HCT116 (cell line): ENCODE measurements at regions of chr16 and their contacts with region 1.

Region 1: DNA sequence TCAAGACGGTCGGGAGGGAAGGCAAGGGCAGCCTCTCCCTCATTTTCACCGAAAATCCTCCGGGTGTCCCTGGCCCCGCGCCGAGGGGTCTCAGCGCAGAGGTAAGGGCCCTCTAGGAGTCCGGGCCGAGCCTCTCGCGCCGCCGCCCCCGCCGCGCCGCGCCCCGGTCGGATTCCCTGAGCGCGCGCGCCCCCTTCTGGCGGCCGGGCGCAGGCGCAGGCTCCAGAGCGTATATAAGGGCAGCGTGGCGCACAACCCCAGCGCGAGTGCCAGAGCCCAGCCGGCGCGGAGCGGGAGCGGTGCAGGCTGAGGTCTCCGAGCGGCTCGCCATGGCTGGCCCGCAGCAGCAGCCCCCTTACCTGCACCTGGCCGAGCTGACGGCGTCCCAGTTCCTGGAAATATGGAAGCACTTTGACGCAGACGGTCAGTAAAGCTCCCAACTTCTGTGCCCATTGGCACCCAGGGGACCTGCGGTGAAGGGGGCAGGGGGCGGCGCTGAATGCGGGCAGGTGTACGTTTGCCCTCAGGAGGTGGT is at the start of gene CALB2:
- DNase-seq: no peak
- ATAC-seq: peak; percentile 91
- H3K4me3 ChIP-seq: peak within 1 kb of the TSS; percentile 47 to 58
- H3K27ac ChIP-seq: no peak within 1 kb of the TSS
- H3K4me1 ChIP-seq: peaks cover 11 to 36% of the 10 kb centered on the region in 2 experiments
- H3K27me3 ChIP-seq: no peaks in the 10 kb centered on the region; the same call in 1 of the 2 replicates
- CTCF ChIP-seq: peak; percentile 54 to 91 (median 74)
- POLR2A ChIP-seq: no peak
- RAD21 ChIP-seq: peak; percentile 85
- total RNA-seq, gene CALB2: 5.5 TPM

Region 2: GRCh38 chr16:70778901-70779309 is 579.6 kb before region 1 on chr16:
- CTCF ChIA-PET with region 1: no interaction called
- POLR2A ChIA-PET with region 1: no interaction called
- RAD21 ChIA-PET with region 1: no interaction called
- intact Hi-C with region 1: loop called (anchors 2 kb)
- DNase-seq: peak; percentile 81
- ATAC-seq: peak; percentile 93
- H3K4me3 ChIP-seq: no peak overlapping the region
- H3K27ac ChIP-seq: no peak overlapping the region
- H3K4me1 ChIP-seq: peaks cover 0 to 11% of the 10 kb centered on the region in 2 experiments; a peak in 3 of 4 replicates
- H3K27me3 ChIP-seq: no peaks in the 10 kb centered on the region
- CTCF ChIP-seq: no peak
- POLR2A ChIP-seq: no peak
- RAD21 ChIP-seq: no peak

Region 3: GRCh38 chr16:70800781-70801530 is 557.6 kb before region 1 on chr16 and contains the start of gene VAC14:
- CTCF ChIA-PET with region 1: no interaction called
- POLR2A ChIA-PET with region 1: no interaction called
- RAD21 ChIA-PET with region 1: no interaction called
- intact Hi-C with region 1: loop called (anchors 5 kb)
- DNase-seq: peak; percentile 87
- ATAC-seq: peak; percentile 98
- H3K4me3 ChIP-seq: peak within 1 kb of the TSS; percentile 74 to 97
- H3K27ac ChIP-seq: peak within 1 kb of the TSS; percentile 57
- H3K4me1 ChIP-seq: peaks cover 9 to 16% of the 10 kb centered on the region in 2 experiments
- H3K27me3 ChIP-seq: no peaks in the 10 kb centered on the region
- CTCF ChIP-seq: no peak
- POLR2A ChIP-seq: peak; percentile 86
- RAD21 ChIP-seq: no peak
- total RNA-seq, gene VAC14: 35.3 TPM

Region 4: DNA sequence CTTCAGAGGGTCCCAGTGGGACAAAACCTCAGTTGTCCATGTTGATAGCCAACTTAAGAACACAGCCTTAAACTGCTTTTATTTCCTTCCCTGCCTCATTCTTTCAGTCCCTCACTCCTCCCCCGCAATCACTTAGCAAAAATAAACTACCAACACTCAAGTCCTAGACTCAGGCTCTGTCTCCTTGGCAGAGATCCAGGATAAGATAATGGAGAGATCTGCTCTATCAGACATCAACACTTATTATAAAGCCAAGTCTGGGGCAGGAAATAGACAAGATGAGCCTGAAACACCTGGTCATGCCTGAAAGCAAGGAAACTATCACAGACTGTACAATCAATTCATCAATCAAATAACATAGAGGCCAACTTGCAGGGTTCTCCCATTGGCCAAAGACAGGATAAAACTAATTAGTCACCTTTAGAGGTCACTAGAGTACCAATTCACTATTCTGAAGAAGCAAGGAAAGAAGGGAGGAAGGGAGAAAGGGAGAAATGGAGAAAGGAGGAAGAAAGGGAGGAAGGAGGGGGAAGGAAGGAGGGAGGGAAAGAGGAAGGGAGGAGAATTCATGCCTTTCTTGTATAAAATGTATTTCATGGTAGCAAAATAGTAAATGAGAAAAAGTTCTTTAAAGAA is 143.7 kb before region 1 on chr16:
- CTCF ChIA-PET with region 1: no interaction called
- POLR2A ChIA-PET with region 1: no interaction called
- RAD21 ChIA-PET with region 1: no interaction called
- intact Hi-C with region 1: loop called (anchors 1 kb)
- DNase-seq: peak; percentile 4
- ATAC-seq: peak; percentile 77
- H3K4me3 ChIP-seq: no peak overlapping the region
- H3K27ac ChIP-seq: no peak overlapping the region
- H3K4me1 ChIP-seq: no peaks in the 10 kb centered on the region
- H3K27me3 ChIP-seq: peaks cover 33% of the 10 kb centered on the region
- CTCF ChIP-seq: peak in 2 of 3 experiments; percentile 16 to 69; a peak in 3 of 6 replicates
- POLR2A ChIP-seq: no peak
- RAD21 ChIP-seq: peak; percentile 70

Region 5: DNA sequence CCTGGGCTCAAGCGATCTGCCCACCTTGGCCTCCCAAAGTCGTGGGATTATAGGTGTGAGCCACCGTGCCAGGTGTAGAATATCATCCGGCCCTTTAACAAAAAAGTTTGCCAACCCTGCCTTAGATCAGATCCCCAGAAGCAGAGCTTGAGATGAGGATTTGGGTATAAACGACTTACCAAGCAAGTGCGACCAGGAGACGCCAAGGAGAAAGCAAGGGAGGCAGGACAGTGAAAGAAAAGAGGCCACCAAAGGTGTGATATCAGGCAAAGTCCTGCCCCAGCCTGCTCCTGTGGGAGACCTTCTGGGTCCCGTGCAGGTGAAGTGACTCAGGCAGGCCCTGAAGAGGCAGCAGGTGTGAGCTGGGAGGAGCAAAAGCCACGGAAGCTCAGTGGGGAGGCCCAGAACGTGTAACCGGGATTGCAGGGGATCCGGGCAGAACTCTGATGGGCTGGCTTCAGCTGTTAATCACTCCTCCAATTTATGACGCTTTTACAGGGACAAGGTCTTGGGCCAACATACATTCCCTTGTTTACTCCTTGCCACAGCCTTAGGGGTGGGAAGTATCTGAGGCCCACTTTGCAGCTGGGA is 14.1 kb before region 1 on chr16:
- CTCF ChIA-PET with region 1: no interaction called
- POLR2A ChIA-PET with region 1: no interaction called
- RAD21 ChIA-PET with region 1: no interaction called
- intact Hi-C with region 1: no loop called
- DNase-seq: no peak
- ATAC-seq: no peak
- H3K4me3 ChIP-seq: no peak overlapping the region
- H3K27ac ChIP-seq: no peak overlapping the region
- H3K4me1 ChIP-seq: peaks cover 0 to 5% of the 10 kb centered on the region in 2 experiments; a peak in 2 of 4 replicates
- H3K27me3 ChIP-seq: no peaks in the 10 kb centered on the region
- CTCF ChIP-seq: no peak
- POLR2A ChIP-seq: no peak
- RAD21 ChIP-seq: no peak

Region 6: GRCh38 chr16:71373073-71373472 is 14.5 kb after region 1 on chr16:
- CTCF ChIA-PET with region 1: no interaction called
- POLR2A ChIA-PET with region 1: no interaction called
- RAD21 ChIA-PET with region 1: no interaction called
- intact Hi-C with region 1: no loop called
- DNase-seq: peak; percentile 21
- ATAC-seq: peak; percentile 85
- H3K4me3 ChIP-seq: no peak overlapping the region
- H3K27ac ChIP-seq: no peak overlapping the region
- H3K4me1 ChIP-seq: peaks cover 9 to 11% of the 10 kb centered on the region in 2 experiments; a peak in 3 of 4 replicates
- H3K27me3 ChIP-seq: no peaks in the 10 kb centered on the region
- CTCF ChIP-seq: no peak
- POLR2A ChIP-seq: no peak
- RAD21 ChIP-seq: no peak

Region 7: DNA sequence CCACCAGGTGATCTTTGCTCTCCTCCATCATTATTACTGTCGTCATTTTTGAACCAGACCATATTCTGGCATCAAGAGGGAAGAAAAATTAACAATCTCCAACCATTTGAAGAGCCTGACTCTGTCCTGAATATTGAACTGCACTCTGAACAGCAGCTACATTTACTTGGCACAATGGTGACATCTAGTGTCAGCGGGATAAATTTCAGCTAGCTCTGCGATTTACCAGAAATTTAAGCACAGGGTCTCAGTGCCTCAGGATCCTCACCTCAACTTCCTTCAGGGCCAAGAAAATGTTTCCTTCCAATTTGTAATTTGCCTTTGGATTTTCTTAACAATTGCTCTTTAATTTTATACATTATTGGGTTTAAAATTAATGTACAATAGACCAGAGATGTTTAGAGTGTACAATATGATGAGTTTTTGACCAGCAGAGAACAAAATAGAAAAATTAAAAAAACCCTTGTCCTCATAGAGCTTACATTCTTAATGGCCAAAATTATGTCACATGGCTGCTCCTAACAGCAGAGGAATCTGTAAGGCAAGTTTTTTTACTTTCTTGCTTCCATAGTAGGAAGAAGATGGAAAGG is 141.3 kb after region 1 on chr16:
- CTCF ChIA-PET with region 1: interaction called, 4 read pairs
- POLR2A ChIA-PET with region 1: no interaction called
- RAD21 ChIA-PET with region 1: no interaction called
- intact Hi-C with region 1: loop called (anchors 5 kb)
- DNase-seq: peak; percentile 57
- ATAC-seq: peak; percentile 86
- H3K4me3 ChIP-seq: no peak overlapping the region
- H3K27ac ChIP-seq: no peak overlapping the region
- H3K4me1 ChIP-seq: 0 out of 4 replicates have a peak, but pooled peaks cover 0 to under 1% of the 10 kb centered on the region in 2 experiments
- H3K27me3 ChIP-seq: no peaks in the 10 kb centered on the region
- CTCF ChIP-seq: peak; percentile 63 to 82 (median 75)
- POLR2A ChIP-seq: no peak
- RAD21 ChIP-seq: peak; percentile 91